Colonic mucosa (tissue), 4 donors: ENCODE measurements at regions of chr1 and their contacts with region 1.

Region 1: DNA sequence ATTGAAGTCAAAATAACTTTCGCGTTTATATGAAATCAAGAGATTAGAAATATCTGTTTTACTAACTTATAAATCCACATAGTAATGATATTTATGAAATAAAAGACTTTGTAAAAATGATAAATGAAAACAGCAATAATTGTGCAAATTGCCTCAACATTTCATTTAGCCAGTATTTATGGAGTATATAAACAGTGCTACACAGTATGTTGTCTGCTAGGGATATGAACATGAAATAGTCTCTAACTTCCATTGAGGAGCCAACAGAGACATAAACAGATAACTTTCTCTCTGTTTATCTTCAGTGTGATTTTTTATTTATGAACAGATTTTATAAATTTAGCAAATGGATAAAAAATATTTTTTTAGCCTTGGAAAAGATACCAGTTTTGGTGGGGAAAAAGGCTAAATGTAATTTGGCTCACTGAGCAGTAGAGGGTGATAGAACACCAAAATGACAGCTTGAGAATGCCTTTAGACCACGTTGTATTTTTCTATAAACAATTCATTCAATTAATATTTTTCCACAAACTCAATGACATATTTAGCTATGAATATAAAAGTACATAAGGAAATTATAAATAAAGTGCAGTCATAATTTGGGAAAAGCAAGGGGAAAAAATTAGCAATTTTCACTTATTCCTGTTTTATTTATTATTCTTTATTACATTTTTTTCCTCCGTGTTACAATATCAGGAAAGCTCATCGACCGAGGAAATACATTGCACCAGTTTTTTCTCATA is 47.5 kb upstream of the EEIG2 start:
- DNase-seq: no peak
- H3K4me3 ChIP-seq: no peak overlapping the region
- H3K27ac ChIP-seq: no peak overlapping the region
- H3K4me1 ChIP-seq: no peaks in the 10 kb centered on the region
- H3K27me3 ChIP-seq: no peaks in the 10 kb centered on the region
- CTCF ChIP-seq: peak; percentile 90

Region 2: GRCh38 chr1:108559215-108560186 is 47.1 kb after region 1 on chr1 and contains the start of gene EEIG2:
- intact Hi-C with region 1: loop called (anchors 5 kb)
- DNase-seq: peak; percentile 91
- H3K4me3 ChIP-seq: peak within 1 kb of the TSS; percentile 69
- H3K27ac ChIP-seq: peak within 1 kb of the TSS; percentile 77
- H3K4me1 ChIP-seq: no peaks in the 10 kb centered on the region
- H3K27me3 ChIP-seq: no peaks in the 10 kb centered on the region
- CTCF ChIP-seq: peak; percentile 73
- total RNA-seq, gene EEIG2: 32.8 to 42.8 TPM

Region 3: GRCh38 chr1:108643492-108644335 is 131.3 kb after region 1 on chr1:
- intact Hi-C with region 1: loop called (anchors 2 kb)
- DNase-seq: peak; percentile 65
- H3K4me3 ChIP-seq: no peak overlapping the region
- H3K27ac ChIP-seq: no peak overlapping the region
- H3K4me1 ChIP-seq: no peaks in the 10 kb centered on the region
- H3K27me3 ChIP-seq: no peaks in the 10 kb centered on the region
- CTCF ChIP-seq: peak; percentile 51

Region 4: GRCh38 chr1:108858240-108858950 is 346.0 kb after region 1 on chr1:
- intact Hi-C with region 1: no loop called
- DNase-seq: no peak
- H3K4me3 ChIP-seq: no peak overlapping the region
- H3K27ac ChIP-seq: no peak overlapping the region
- H3K4me1 ChIP-seq: no peaks in the 10 kb centered on the region
- H3K27me3 ChIP-seq: no peaks in the 10 kb centered on the region
- CTCF ChIP-seq: no peak